ENCODE measurements at regions of chr7 and their contacts with region 1.

Region 1: DNA sequence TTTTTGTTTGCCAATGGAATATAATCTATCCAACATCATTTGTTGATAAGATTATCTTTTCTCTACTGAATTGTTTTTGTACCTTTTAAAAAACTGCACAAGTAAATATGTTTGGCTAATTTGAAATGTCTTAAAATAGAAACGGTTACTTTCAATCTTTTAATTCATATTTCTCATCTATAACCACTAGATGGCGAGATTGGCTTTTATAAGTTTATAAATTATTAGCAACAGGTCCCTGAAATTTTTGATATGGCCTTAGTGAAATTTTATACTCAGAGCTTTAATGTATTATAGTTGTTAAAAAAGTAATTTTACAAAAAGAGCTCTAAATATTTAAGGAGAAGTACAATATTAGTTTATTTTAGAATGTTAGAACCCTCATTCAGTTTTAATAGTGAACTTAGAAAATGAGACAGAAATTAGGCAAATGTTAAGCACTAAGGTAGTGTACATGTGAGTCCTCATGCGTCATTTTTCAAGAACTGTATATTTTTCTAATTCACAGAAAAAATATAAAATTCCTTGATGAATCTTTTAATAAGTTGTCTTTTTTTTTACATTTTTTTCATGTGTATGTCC is 592.5 kb downstream of the ARL4A start:
- DNase-seq: no peak
- ATAC-seq: no peak
- H3K4me3 ChIP-seq: no peak overlapping the region
- H3K27ac ChIP-seq: no peak overlapping the region
- H3K4me1 ChIP-seq: no peaks in the 10 kb centered on the region
- H3K27me3 ChIP-seq: no peaks in the 10 kb centered on the region
- CTCF ChIP-seq: peak; percentile 10 to 53 (median 29)
- POLR2A ChIP-seq: no peak

Region 2: GRCh38 chr7:13742811-13743210 is 462.9 kb after region 1 on chr7:
- in situ Hi-C with region 1: loop called in 2 of 4 experiments (anchors 10 to 25 kb)
- intact Hi-C with region 1: loop called (anchors 2 kb)
- DNase-seq: no peak
- ATAC-seq: no peak
- H3K4me3 ChIP-seq: no peak overlapping the region
- H3K27ac ChIP-seq: no peak overlapping the region
- H3K4me1 ChIP-seq: peaks cover 7 to 10% of the 10 kb centered on the region in 2 donors
- H3K27me3 ChIP-seq: no peaks in the 10 kb centered on the region
- CTCF ChIP-seq: peak; percentile 13 to 45 (median 30)
- POLR2A ChIP-seq: no peak

Region 3: DNA sequence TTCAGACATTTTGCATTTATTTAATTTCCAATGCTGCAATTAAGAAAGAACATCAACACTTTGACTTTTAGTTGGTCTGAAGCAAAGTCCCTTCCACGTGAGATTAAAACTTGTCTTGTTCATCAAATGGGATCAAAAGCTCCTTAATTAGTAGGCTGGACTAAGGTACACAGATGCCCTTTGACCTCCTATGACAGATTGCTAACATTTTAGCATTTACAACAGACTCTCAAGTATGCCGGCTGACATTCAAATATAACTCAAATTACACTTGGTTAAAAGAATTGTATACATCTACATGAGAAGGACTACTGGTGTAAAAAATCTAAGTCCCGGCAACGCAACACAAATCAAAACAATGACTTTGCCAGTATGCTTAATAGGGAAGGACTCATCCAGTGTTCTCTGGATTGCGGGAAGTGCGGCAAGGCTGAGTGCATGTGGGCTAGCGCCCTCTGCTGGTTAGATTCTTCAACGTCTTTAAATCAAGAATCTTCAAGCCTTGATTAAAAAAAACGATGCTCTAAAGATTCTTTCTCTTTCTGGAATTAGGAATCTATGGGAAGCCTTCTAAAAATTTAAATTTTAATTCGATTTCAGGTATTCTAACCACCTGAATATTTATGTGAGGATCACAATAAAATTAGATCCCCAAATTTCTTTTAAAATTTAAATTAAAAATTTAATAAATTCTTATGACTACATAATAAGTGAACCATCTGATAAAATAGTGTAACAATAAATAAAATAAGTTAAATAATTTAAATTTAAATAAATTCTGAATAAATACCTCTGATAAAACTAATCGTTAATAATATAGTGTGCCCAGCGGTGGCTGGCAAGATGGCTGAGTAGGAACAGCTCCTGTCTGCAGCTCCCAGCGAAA is 1177.9 kb after region 1 on chr7:
- in situ Hi-C with region 1: loop called (anchors 5 to 10 kb)
- intact Hi-C with region 1: loop called (anchors 2 kb)
- DNase-seq: peak; percentile 17 to 27
- ATAC-seq: peak in 1 of 2 donors; percentile 47
- H3K4me3 ChIP-seq: peak overlapping the region in 1 of 4 donors; percentile 26
- H3K27ac ChIP-seq: no peak overlapping the region
- H3K4me1 ChIP-seq: no peaks in the 10 kb centered on the region
- H3K27me3 ChIP-seq: no peaks in the 10 kb centered on the region
- CTCF ChIP-seq: peak; percentile 39 to 84 (median 58)
- POLR2A ChIP-seq: no peak

Region 4: GRCh38 chr7:14691597-14692203 is 1411.8 kb after region 1 on chr7:
- in situ Hi-C with region 1: loop called in 3 of 4 experiments (anchors 10 to 25 kb)
- intact Hi-C with region 1: loop called (anchors 2 kb)
- DNase-seq: peak in 1 of 2 donors; percentile 14
- ATAC-seq: no peak
- H3K4me3 ChIP-seq: no peak overlapping the region
- H3K27ac ChIP-seq: no peak overlapping the region
- H3K4me1 ChIP-seq: no peaks in the 10 kb centered on the region
- H3K27me3 ChIP-seq: no peaks in the 10 kb centered on the region
- CTCF ChIP-seq: peak; percentile 53 to 82 (median 59)
- POLR2A ChIP-seq: no peak